ENCODE measurements at regions of chr2 and their contacts with region 1.

Region 1: DNA sequence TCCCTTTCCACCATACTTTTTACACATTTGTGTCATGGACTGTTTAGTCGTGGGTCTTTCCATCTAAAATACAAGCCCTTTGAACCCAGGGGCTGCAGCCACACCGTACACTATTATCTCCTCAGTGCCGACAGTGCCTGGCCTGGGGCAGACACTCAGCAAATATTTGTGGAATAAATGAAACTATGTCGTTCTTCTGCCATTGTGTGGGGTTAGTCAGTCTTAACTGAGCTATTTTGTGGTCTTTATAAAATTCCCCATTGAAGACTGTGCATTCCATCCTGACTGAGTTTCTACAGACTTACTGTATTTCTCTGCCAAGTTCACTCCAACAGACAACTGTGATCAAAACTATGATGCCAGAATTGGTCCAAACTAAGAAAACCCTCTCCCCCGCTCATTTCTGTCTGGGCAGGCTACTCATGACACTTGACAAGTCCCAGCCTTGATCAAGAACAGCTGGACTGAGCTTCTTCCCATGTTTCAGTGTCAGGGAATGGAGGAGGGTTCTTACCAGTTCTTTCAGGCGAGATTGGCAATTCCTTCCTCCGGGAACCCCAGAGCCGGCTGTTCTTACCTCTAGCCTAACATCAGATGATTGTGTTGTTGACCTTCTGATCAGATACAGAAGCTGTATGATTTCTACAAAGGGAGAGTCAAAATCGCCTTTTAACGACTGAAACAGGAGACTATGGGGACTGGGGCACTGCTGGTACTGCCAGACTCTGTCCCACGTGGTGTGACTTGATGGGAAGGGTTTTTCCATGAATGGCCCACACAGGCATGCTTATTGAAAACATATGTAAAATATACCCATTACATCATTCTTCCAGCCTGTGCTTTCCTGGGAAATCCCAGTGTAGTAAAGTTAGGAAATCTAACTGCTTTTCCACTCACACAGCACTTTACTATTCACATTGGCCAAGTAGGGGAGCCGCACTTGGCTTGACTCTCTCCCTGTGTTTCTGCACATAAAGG is 77.4 kb upstream of the NPAS2 start:
- DNase-seq: peak; percentile 98
- H3K4me3 ChIP-seq: peak overlapping the region; percentile 28
- CTCF ChIP-seq: no peak

Region 2: DNA sequence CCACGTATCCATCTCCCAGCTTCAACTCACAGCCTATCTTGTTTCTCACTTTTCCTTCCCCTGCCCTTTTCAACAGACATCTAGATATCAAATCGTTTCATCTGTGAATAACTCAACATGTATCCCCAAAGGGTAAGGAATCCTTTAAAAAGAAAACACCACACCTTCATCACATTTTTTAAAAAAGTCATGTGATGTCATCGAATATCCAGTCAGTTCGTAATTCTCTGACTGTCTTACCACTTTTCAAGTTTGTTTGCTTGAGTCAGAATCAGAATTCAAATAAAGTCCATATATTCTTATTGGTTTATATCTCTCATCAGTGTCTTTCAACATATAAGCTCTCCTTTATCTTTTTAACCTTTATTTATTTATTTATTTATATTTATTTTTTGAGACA is 414.8 kb before region 1 on chr2:
- CTCF ChIA-PET with region 1: no interaction called
- POLR2A ChIA-PET with region 1: no interaction called
- DNase-seq: no peak
- H3K4me3 ChIP-seq: no peak overlapping the region
- CTCF ChIP-seq: no peak

Region 3: GRCh38 chr2:100752628-100753333 is 10.2 kb after region 1 on chr2:
- CTCF ChIA-PET with region 1: no interaction called
- POLR2A ChIA-PET with region 1: interaction called, 14 read pairs
- DNase-seq: peak; percentile 77
- H3K4me3 ChIP-seq: no peak overlapping the region
- CTCF ChIP-seq: no peak

Region 4: DNA sequence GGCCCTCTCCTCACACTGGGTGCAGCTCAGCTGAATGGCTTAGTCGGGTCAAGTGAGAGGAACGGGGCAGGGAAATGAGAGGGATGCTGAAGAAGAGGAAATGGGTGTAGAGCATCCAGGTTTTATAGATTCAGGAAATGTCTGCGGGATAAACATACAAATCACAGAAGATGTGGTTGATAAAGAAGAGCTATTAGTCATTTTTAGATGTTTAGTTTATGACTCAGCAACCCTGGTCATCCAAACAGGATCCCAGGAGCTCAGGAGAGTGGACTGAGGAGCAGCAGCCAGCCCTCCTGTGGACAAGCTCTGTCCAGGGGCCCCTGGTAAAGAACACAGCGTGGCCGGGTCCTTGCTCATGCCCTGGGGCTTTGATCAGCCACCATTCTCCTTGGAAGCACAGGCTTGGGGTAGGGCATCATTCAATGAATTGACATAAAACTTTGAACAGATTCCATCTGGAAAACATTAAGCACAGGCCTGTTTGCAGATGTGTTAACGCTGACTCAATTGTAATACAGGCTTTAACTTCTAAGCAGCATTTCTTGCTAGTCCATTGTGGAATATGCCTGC is 160.4 kb after region 1 on chr2:
- CTCF ChIA-PET with region 1: no interaction called
- POLR2A ChIA-PET with region 1: interaction called, 10 read pairs
- DNase-seq: peak; percentile 85
- H3K4me3 ChIP-seq: no peak overlapping the region
- CTCF ChIP-seq: peak; percentile 31